IMR-90 (cell line): ENCODE measurements at regions of chr2 and their contacts with region 1.

Region 1: GRCh38 chr2:30072250-30072842 is 74.5 kb upstream of the YPEL5 start:
- DNase-seq: peak; percentile 72
- ATAC-seq: peak; percentile 96
- H3K4me3 ChIP-seq: no peak overlapping the region
- H3K27ac ChIP-seq: no peak overlapping the region
- H3K4me1 ChIP-seq: no peaks in the 10 kb centered on the region
- H3K27me3 ChIP-seq: peaks cover 21% of the 10 kb centered on the region
- CTCF ChIP-seq: peak; percentile 78
- POLR2A ChIP-seq: no peak
- RAD21 ChIP-seq: peak; percentile 77

Region 2: DNA sequence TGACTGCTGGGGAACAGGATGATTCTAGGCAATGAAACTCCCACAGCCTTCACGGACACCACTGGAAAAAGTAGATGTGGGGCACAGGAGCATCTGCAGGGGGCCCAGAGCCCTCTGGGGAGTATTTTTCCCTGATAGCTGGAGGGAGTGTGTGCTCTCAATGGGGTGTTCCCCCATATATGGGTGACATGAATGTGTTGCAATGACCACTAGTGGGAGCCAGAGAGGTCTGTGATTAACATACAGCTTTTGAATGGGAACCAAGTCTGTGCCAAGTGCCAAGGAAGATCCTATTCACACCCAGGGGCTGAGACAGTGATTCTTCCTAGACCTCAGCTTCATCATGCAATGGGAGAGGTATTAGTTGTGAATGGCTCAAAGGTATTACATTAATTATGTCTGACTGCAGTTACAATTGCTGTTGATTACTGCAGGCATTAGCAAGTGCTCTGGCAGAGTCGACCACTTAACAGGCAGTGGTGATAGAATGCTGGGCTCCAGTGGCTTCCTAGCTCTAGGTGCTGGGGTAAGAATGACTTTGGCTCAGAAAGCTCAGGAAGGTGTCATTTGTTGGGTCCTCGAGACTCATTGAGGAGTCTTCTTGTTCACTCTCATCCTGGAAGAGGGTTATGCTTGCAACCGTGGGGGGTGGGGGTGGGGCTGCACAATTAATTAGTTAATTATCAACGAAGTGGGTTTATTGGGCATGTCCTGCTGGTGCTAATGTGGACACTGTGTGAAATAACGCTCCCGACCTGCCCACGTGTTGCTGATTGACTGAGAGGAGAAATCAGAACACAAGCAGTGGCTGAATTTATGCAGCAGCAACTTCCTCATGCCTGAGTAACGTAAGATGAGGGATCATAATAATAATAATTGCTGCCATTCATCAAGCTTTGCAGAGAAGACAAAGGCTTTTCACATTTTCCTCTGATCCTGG is 763.0 kb before region 1 on chr2:
- CTCF ChIA-PET with region 1: no interaction called
- POLR2A ChIA-PET with region 1: no interaction called
- dilution Hi-C with region 1: no loop called
- in situ Hi-C with region 1: no loop called
- intact Hi-C with region 1: loop called (anchors 1 kb)
- DNase-seq: peak; percentile 66
- ATAC-seq: peak; percentile 95
- H3K4me3 ChIP-seq: no peak overlapping the region
- H3K27ac ChIP-seq: no peak overlapping the region
- H3K4me1 ChIP-seq: no peaks in the 10 kb centered on the region
- H3K27me3 ChIP-seq: peaks cover 23% of the 10 kb centered on the region
- CTCF ChIP-seq: peak; percentile 71
- POLR2A ChIP-seq: no peak
- RAD21 ChIP-seq: peak; percentile 71

Region 3: DNA sequence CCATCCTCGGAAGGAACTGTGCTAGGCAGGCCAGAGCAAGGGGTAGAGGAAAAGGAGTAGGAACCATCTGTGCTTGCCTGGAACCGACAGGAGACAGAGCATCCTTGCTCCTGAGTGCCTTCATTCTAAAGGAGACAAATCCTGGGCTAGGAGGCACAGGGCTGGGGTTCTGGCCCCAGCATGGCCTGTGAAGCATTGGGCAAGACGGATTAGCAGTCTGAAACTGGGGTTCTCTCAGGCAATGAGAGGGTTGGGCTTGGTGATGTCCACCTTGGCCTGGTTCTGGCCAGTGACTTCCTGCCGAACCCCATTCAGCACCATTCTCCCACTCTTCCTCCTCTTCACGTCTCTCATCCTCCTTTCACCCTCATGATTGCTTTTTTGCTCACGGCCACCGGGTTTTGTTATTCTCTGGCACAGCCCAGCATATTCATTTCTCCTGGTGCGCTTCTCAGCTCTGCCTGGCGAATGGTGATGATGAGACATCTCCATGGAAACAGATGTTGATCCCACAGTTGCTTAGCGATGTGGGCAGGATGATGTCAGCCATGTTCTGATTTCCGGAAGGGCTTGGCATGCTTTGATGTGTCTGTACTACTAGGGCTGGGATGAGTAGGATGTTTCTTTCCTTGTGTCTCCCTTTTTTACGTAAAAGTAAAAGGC is 607.2 kb after region 1 on chr2:
- CTCF ChIA-PET with region 1: no interaction called
- POLR2A ChIA-PET with region 1: no interaction called
- dilution Hi-C with region 1: no loop called
- in situ Hi-C with region 1: no loop called
- intact Hi-C with region 1: no loop called
- DNase-seq: peak; percentile 59
- ATAC-seq: no peak
- H3K4me3 ChIP-seq: no peak overlapping the region
- H3K27ac ChIP-seq: no peak overlapping the region
- H3K4me1 ChIP-seq: no peaks in the 10 kb centered on the region
- H3K27me3 ChIP-seq: no peaks in the 10 kb centered on the region
- CTCF ChIP-seq: no peak
- POLR2A ChIP-seq: no peak
- RAD21 ChIP-seq: no peak